ENCODE measurements at regions of chr2 and their contacts with region 1.

Region 1: GRCh38 chr2:39325966-39326365 is 82.2 kb upstream of the CDKL4 start:
- DNase-seq: no peak
- ATAC-seq: no peak

Region 2: DNA sequence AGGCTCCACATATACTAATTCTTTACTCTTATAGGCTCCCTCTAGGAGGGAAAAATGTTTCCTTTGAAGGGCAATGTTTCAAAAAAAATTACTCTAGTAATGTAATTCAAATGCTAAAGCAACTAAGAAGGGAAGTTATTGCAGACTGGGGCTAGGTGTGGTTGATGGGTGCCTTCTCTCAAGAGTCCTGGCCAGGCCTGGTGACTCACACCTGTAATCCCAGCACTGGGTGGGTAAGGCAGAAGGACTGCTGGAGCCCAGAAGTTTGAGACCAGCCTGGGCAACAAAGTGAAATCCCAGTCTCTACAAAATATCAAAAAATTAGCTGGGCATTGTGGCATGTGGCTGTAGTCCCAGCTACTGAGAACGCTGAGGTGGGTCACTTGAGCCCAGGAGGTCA is 51.0 kb before region 1 on chr2:
- intact Hi-C with region 1: loop called (anchors 10 kb)
- DNase-seq: no peak
- ATAC-seq: no peak

Region 3: GRCh38 chr2:39464864-39465263 is 138.9 kb after region 1 on chr2:
- intact Hi-C with region 1: no loop called
- DNase-seq: no peak
- ATAC-seq: no peak

Region 4: DNA sequence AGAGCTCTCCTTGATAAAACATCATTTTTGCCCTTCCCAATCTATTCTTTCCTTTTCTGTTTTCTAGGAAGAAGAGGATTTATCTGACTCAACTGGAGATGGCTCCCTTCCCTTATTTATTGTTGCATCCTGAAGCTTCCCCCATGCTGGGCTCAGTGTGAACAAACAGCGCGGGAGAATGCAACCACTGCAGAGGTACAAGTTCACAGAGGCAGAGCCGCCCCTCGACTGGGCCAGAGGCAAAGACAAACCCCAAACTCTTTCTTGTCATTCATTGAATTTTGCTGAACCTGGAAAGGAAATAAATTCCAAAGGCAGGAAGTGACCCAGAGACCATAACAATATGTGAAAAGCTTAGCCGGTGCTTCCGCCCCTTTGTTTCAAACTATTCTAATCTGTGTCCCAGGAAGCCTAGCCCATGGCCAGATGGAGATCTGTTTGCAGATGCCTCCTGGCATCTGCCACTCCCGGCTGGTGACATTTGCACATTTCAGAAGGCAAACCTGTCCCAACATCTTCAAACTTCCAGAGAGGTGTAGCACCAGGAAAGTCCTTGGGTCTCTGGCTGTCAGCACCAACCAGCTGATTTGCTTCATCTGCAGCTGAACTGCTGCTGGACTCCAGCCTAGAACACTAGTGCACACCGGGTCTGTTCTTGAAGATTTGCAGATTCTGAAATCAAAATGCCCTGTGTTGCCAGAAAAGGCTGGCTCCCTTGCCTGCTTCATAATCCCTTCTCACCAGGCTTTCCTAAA is 190.6 kb after region 1 on chr2:
- intact Hi-C with region 1: no loop called
- DNase-seq: peak; percentile 67
- ATAC-seq: peak; percentile 83

Region 5: GRCh38 chr2:39568561-39569006 is 242.6 kb after region 1 on chr2:
- intact Hi-C with region 1: no loop called
- DNase-seq: no peak
- ATAC-seq: peak; percentile 59

Region 6: GRCh38 chr2:39696838-39697237 is 370.9 kb after region 1 on chr2:
- intact Hi-C with region 1: no loop called
- DNase-seq: no peak
- ATAC-seq: peak; percentile 73